A549 (cell line): ENCODE measurements at regions of chr22 and their contacts with region 1.

Region 1: DNA sequence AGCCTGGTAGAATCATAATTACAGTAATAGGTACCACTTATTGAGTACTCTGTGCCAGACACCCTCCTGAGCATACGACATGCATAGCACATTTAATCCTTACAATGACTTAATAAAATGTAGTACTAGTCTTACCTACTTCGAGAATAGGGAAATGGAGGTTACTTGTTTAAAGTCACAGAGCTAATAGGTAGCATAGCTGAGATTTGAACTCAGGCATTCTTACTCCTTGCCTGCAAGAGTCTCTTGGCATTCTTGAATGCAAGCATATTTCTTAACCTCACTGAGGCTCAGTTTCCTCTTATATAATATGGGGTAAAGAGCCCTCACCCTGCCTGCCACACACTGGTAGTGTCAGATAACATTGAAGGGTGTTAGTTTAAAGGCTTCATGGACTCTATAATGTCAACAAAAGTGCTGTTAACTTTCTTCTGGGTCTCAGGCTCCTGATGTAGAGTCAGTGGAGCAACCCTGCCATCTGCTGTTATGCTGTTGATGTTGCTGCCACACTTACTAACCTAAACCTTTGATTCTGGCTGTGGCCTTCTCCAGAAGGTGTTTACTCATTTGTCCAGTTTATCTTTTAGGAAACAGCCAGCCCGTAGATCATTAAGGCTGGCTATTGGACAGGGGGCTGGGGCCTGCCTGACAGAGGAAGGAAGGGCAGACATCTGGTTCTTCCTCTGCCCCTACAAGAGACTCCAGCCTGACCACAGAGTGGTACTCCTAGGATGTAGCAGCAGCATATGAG is 18.9 kb downstream of the LIMK2 start:
- DNase-seq: peak in 1 of 2 experiments; percentile 40
- ATAC-seq: peak; percentile 73 to 78; a peak in 5 of 6 replicates
- H3K4me3 ChIP-seq: no peak overlapping the region
- H3K27ac ChIP-seq: no peak overlapping the region
- H3K4me1 ChIP-seq: 0 out of 3 replicates have a peak, but pooled peaks cover 6% of the 10 kb centered on the region
- CTCF ChIP-seq: peak; percentile 50
- EP300 ChIP-seq: no peak
- POLR2A ChIP-seq: no peak
- RAD21 ChIP-seq: peak; percentile 61 to 66

Region 2: GRCh38 chr22:30777587-30777986 is 453.5 kb before region 1 on chr22:
- CTCF ChIA-PET with region 1: no interaction called
- POLR2A ChIA-PET with region 1: no interaction called
- DNase-seq: no peak
- ATAC-seq: no peak
- H3K4me3 ChIP-seq: no peak overlapping the region
- H3K27ac ChIP-seq: no peak overlapping the region
- H3K4me1 ChIP-seq: peaks cover 5% of the 10 kb centered on the region; the same call in 2 of the 3 replicates
- CTCF ChIP-seq: no peak
- EP300 ChIP-seq: no peak
- POLR2A ChIP-seq: no peak
- RAD21 ChIP-seq: no peak

Region 3: DNA sequence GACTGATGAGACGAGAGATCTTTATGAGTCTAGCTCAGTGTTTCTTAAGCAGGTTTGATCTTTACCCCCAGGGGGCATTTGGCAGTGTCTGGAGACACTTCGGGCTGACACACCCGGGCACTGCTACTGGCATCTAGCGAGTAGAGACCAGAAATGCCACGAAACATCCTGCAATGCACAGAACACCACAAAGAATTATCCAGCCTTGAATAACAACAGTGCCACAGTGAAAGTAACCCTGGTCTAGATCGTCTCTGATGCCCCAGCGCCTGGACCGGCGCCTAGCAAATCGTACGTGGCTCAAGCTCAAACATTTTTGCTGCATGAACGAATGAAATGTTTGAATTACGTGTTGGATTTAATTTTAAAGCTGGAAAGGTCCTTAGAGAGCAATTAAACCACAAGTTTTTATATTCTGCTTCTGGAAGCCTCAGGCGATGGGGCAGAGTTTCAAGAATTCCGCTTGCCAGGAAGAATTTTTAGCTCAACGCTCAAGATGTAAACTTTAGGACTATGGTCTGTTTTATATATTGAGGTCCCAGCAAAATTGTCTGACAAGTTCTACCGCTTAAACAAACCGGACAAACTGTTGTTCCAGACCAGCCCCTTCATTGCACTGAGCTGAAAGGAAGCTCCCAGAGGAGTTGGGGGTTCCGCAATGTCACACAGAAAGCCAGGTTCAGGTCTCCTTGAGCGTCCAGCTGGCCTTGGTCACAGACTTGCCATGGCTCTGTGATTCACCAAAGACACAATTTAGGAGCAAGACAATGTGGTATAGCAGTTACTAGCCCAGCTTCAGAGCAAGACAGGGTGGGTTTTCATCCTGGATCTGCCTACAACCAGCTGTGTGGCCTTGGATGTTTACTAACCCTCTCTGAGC is 194.1 kb before region 1 on chr22:
- CTCF ChIA-PET with region 1: no interaction called
- POLR2A ChIA-PET with region 1: no interaction called
- DNase-seq: peak in 1 of 2 experiments; percentile 60
- ATAC-seq: peak; percentile 82 to 85
- H3K4me3 ChIP-seq: no peak overlapping the region
- H3K27ac ChIP-seq: peak overlapping the region; percentile 17 to 36; a peak in 2 of 6 replicates
- H3K4me1 ChIP-seq: peaks cover 11% of the 10 kb centered on the region; the same call in 1 of the 3 replicates
- CTCF ChIP-seq: 0 out of 3 replicates have a peak, but pooled peaks have one; percentile 9
- EP300 ChIP-seq: no peak
- POLR2A ChIP-seq: no peak
- RAD21 ChIP-seq: peak; percentile 27 to 29; a peak in 2 of 5 replicates

Region 4: DNA sequence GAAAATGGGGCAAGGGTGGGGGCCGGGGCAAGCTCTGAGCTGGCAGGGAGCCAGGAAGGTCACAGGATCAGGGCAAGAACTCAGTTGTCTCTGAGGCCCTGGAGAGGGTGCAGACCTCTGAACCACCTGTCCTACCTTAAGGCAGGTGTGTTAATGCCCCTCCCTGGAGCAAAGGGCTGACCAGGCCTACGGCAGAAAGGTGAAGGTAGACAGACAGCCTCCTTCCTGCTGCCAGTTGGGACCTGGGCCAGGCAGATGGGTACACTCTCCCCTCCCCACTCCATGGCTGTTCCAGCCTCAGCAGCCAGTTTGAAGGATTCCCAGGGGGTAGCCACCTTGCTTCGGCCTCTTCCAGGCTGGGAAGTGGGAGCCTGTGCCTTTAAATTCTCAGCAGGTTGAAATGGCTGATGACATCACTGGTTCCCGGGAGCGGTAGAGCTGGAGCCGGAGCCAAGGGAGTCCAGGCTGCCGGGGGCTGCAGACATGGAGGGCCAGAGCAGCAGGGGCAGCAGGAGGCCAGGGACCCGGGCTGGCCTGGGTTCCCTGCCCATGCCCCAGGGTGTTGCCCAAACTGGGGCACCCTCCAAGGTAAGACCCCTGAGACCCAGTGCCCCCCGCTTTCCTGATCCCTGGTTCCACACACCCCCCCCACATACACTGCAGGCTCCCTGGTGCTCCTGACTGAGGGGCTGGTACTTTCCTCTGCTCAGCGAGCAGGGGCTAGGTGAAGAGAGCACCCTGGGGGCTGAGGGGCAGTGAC is 108.3 kb before region 1 on chr22 and contains the start of gene INPP5J:
- CTCF ChIA-PET with region 1: no interaction called
- POLR2A ChIA-PET with region 1: no interaction called
- DNase-seq: peak; percentile 24 to 78
- ATAC-seq: peak; percentile 82 to 88
- H3K4me3 ChIP-seq: peak within 1 kb of the TSS; percentile 62
- H3K27ac ChIP-seq: peak within 1 kb of the TSS; percentile 81 to 94
- H3K4me1 ChIP-seq: peaks cover 11% of the 10 kb centered on the region
- CTCF ChIP-seq: no peak
- EP300 ChIP-seq: no peak
- POLR2A ChIP-seq: 0 out of 2 replicates have a peak, but pooled peaks have one; percentile 15
- RAD21 ChIP-seq: no peak
- polyA plus RNA-seq, gene INPP5J: 0.70 and 0.98 TPM in 2 replicates

Region 5: DNA sequence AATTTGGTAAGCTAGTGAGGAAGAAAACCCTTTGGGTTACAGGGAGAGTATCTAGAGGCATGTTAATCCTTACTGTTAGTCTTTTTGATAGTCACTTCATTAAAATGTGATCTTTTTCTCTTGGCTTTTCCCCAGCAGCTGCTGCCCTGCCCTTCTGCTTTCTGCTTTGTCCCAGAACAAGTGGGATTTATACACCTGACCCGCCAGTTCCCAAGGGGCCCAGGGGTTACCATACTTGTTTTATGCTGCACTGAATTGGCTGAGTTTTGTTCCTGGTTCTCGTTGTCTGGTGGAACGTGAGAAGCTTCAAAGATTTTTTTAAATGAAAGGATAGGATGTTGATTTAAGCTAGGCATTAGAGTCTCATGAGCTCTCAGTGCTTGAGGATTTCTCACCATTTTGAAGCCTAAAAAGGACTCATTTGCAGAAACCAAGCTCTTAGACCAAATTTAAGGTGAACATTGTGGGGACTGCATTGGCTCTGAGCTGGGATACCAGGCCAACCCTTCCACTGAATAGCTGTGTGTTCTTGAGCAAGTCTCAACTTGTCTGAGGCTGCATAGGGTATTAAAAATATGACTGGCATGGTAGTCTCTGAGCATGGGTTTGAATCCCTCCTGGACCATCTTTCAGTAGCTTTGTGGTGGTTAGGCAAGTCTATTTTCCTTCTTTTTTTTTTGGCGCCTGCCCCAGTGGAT is 12.3 kb before region 1 on chr22:
- CTCF ChIA-PET with region 1: interaction called, 64 read pairs
- POLR2A ChIA-PET with region 1: no interaction called
- DNase-seq: no peak
- ATAC-seq: no peak
- H3K4me3 ChIP-seq: no peak overlapping the region
- H3K27ac ChIP-seq: 0 out of 6 replicates have a peak overlapping the region, but pooled peaks of 1 of the 2 experiments have one; percentile 10
- H3K4me1 ChIP-seq: peaks cover 6% of the 10 kb centered on the region; the same call in 1 of the 3 replicates
- CTCF ChIP-seq: no peak
- EP300 ChIP-seq: no peak
- POLR2A ChIP-seq: no peak
- RAD21 ChIP-seq: no peak

Region 6: GRCh38 chr22:31248138-31248745 is 17.2 kb after region 1 on chr22:
- CTCF ChIA-PET with region 1: interaction called, 26 read pairs
- POLR2A ChIA-PET with region 1: interaction called, 3 read pairs
- DNase-seq: no peak
- ATAC-seq: peak in 1 of 2 experiments; percentile 66; a peak in 3 of 6 replicates
- H3K4me3 ChIP-seq: no peak overlapping the region
- H3K27ac ChIP-seq: 0 out of 6 replicates have a peak overlapping the region, but pooled peaks of 1 of the 2 experiments have one; percentile 10
- H3K4me1 ChIP-seq: peaks cover 28% of the 10 kb centered on the region
- CTCF ChIP-seq: no peak
- EP300 ChIP-seq: no peak
- POLR2A ChIP-seq: no peak
- RAD21 ChIP-seq: no peak

Region 7: GRCh38 chr22:31676700-31677099 is 445.7 kb after region 1 on chr22:
- CTCF ChIA-PET with region 1: no interaction called
- POLR2A ChIA-PET with region 1: no interaction called
- DNase-seq: peak; percentile 83 to 90
- ATAC-seq: peak; percentile 100
- H3K4me3 ChIP-seq: peak overlapping the region; percentile 40
- H3K27ac ChIP-seq: peak overlapping the region; percentile 60 to 79
- H3K4me1 ChIP-seq: no peaks in the 10 kb centered on the region
- CTCF ChIP-seq: no peak
- EP300 ChIP-seq: no peak
- POLR2A ChIP-seq: no peak
- RAD21 ChIP-seq: no peak